HCT116 (cell line): ENCODE measurements at regions of chr18 and their contacts with region 1.

Region 1: DNA sequence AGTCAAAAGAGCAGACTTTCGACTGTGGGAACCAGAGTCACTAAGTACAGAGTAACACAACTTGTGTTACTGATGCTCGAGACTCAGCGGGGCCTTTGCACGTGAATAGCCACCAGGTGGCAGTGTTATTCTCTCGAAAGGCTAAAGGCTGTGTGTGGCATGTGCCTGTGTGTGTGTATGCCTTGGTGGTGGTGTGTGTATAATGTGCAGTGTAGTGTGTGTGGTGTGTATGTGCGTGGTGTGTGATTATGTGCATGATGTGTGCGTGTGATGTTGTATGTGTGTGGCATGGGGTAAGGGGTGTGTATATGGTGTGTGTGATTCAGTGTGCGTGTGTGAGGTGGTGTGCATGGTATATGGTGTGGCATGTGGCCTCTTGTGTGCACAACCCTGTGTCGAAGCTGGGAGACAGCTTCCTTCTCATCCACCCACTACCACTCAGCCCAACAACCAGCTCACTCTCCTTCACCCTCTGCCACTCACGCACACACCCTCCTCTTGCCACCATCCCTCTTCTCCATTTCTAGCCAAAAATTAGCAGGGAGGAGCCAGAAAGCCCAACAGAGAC is 83.0 kb upstream of the ZNF532 start:
- DNase-seq: peak; percentile 69
- ATAC-seq: peak; percentile 63
- H3K4me3 ChIP-seq: no peak overlapping the region
- H3K27ac ChIP-seq: no peak overlapping the region
- H3K4me1 ChIP-seq: peaks cover 12 to 26% of the 10 kb centered on the region in 2 experiments
- H3K27me3 ChIP-seq: peaks cover 23% of the 10 kb centered on the region
- CTCF ChIP-seq: peak; percentile 81 to 93 (median 91)
- POLR2A ChIP-seq: no peak
- RAD21 ChIP-seq: peak; percentile 97

Region 2: GRCh38 chr18:58484989-58485981 is 296.4 kb before region 1 on chr18:
- CTCF ChIA-PET with region 1: no interaction called
- POLR2A ChIA-PET with region 1: no interaction called
- RAD21 ChIA-PET with region 1: no interaction called
- intact Hi-C with region 1: no loop called
- DNase-seq: no peak
- ATAC-seq: no peak
- H3K4me3 ChIP-seq: no peak overlapping the region
- H3K27ac ChIP-seq: no peak overlapping the region
- H3K4me1 ChIP-seq: no peaks in the 10 kb centered on the region
- H3K27me3 ChIP-seq: peaks cover 11% of the 10 kb centered on the region; the same call in 1 of the 2 replicates
- CTCF ChIP-seq: no peak
- POLR2A ChIP-seq: no peak
- RAD21 ChIP-seq: no peak

Region 3: DNA sequence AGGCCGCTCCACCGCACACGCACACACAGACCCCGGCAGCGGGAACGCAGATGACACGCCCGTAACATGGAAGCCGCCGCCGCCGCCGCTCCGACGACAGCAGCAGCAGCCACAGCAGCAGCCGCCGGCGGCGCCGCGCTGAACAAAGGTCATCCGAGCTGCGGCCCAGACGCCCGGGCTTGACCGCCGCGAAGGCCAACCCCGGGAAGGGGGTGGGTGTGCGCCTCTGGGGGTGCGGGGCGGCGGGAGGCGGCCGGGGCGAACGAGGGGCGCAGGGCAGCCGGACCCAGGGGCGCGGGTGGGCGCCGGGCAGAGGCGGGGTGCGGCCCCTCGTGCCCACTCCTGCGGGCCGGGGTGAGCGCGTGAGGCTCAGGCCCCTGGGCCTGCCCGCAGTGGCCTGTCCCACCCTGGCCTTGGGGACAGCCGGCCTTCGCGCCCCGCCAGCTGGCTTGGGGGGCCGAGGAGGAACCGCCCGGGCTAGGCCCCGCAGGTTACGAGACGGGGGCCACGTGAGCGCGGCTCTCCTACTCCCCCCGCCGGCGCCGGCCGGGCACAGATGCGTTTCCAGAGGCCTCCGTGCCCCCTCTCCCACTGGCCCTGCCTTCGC is 81.9 kb after region 1 on chr18:
- CTCF ChIA-PET with region 1: no interaction called
- POLR2A ChIA-PET with region 1: no interaction called
- RAD21 ChIA-PET with region 1: no interaction called
- intact Hi-C with region 1: loop called (anchors 5 kb)
- DNase-seq: no peak
- ATAC-seq: peak; percentile 66
- H3K4me3 ChIP-seq: peak overlapping the region; percentile 25 to 49
- H3K27ac ChIP-seq: no peak overlapping the region; the same call in 1 of the 2 replicates
- H3K4me1 ChIP-seq: peaks cover 7 to 22% of the 10 kb centered on the region in 2 experiments; a peak in 3 of 4 replicates
- H3K27me3 ChIP-seq: no peaks in the 10 kb centered on the region
- CTCF ChIP-seq: no peak
- POLR2A ChIP-seq: no peak
- RAD21 ChIP-seq: no peak

Region 4: DNA sequence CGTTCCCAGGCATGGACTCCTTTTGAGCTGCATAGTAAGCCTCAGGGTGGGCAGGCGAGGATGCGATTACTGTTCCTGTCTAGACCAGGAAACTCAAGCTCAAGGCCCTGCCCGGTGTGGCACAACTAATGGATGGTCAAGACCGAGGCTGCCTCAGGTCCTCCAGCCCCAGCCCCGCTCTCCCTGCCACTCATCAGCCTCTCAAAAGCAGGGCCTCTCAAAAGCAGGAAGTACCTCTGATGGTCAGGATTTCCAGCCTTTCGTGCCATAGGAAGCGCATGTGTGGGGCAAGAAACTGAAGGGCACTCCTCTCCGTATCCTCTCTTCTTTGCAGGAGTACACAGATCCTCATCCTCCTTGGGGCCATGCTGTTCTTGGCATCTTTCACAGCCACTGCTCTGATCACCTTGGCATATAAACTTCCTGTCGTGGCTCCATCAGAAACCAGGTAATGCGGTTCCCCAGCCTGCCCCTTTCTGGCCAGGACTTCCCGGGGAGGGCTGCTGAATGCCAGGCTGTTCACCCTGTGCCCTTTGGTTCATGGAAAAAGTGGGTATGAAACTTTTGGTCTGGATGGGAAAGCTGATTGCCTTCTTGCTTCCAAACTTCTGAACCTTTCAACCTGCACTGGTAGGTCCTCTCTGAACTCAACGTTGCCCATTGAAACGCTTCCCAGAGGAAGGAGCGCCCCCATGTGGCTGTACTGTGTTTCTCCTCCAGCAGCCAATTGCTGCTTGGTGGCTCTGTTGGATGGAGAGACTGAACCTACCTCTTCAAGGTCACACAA is 275.2 kb after region 1 on chr18:
- CTCF ChIA-PET with region 1: interaction called, 7 read pairs
- POLR2A ChIA-PET with region 1: no interaction called
- RAD21 ChIA-PET with region 1: no interaction called
- intact Hi-C with region 1: loop called (anchors 1 kb)
- DNase-seq: peak; percentile 51
- ATAC-seq: peak; percentile 89
- H3K4me3 ChIP-seq: no peak overlapping the region
- H3K27ac ChIP-seq: no peak overlapping the region
- H3K4me1 ChIP-seq: no peaks in the 10 kb centered on the region
- H3K27me3 ChIP-seq: peaks cover 38% of the 10 kb centered on the region
- CTCF ChIP-seq: peak; percentile 87 to 96 (median 93)
- POLR2A ChIP-seq: no peak
- RAD21 ChIP-seq: peak; percentile 97